Posterior cingulate gyrus (tissue), 11 donors: ENCODE measurements at regions of chr3 and their contacts with region 1.

Region 1: DNA sequence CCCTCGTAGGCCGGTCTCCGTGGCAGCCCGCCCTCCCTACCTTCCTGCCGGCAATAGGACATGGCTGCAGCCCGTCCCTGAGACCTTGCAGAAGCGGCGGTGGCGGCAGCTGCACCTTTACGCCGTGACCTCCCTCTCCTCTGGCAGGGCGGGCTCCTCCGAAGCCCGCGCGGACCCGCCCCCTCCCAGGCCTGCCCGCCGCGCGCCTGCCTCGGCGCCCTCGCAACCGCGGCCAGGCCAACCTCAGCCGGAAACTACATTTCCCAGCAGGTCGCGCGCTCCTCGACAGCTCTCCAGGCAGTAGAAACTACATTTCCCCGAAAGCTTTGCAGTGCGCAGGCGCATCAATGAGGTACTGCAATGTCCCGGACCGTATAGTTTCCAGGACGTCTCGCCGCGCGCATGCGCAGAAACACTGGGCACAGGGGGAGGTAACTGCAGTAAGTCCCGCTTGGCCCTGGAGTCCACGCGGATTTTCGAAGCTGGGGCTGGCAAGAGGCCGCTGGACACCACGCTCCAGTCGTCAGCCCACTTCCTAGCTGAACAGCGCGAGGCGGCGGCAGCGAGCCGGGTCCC is at the starts of genes CHCHD4 and TMEM43:
- DNase-seq: peak; percentile 99 to 100 (median 100)

Region 2: GRCh38 chr3:14016885-14017475 is 107.7 kb before region 1 on chr3:
- intact Hi-C with region 1: no loop called
- DNase-seq: no peak

Region 3: GRCh38 chr3:14178247-14179113 is 53.8 kb after region 1 on chr3 and contains the starts of genes LSM3 and XPC:
- intact Hi-C with region 1: loop called (anchors 1 kb)
- DNase-seq: peak; percentile 96 to 100 (median 97)

Region 4: GRCh38 chr3:14274999-14275961 is 150.6 kb after region 1 on chr3:
- intact Hi-C with region 1: no loop called
- DNase-seq: no peak